ENCODE measurements at regions of chr6 and their contacts with region 1.

Region 1: DNA sequence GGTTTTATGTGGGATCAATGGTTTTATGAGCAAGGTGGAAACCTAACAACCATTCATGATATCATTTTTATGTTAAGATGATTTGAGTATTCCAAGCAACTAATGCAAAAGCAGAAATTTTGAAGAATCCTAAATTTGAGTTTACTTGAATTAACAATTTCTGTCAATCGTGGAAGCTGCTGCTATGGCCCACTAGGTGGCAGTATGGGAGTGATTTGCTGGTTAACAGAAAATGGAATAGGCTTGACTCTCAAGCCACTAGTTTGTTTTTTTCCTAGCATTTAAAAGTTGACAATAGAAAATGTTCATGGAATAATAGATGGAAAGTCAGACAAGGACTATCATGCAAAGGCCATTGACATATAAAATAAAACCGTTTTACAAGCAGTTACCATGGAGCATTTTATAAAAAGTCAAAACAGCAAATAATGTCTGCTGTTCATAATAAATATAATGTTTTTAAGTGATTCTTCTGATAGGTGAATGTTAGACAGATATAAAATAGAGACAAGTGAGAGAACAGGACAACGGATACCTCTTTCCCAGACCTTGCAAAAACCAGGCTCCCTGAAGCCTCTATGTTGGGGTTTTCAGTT is 43.0 kb upstream of the TMEM200A start:
- DNase-seq: peak; percentile 57 to 66
- H3K4me3 ChIP-seq: no peak overlapping the region
- H3K4me1 ChIP-seq: no peaks in the 10 kb centered on the region
- H3K27me3 ChIP-seq: peaks cover 6% of the 10 kb centered on the region; the same call in 1 of the 2 replicates

Region 2: GRCh38 chr6:130167655-130168054 is 155.1 kb before region 1 on chr6:
- in situ Hi-C with region 1: no loop called
- DNase-seq: no peak
- H3K4me3 ChIP-seq: no peak overlapping the region
- H3K4me1 ChIP-seq: no peaks in the 10 kb centered on the region
- H3K27me3 ChIP-seq: no peaks in the 10 kb centered on the region; the same call in 1 of the 2 replicates

Region 3: DNA sequence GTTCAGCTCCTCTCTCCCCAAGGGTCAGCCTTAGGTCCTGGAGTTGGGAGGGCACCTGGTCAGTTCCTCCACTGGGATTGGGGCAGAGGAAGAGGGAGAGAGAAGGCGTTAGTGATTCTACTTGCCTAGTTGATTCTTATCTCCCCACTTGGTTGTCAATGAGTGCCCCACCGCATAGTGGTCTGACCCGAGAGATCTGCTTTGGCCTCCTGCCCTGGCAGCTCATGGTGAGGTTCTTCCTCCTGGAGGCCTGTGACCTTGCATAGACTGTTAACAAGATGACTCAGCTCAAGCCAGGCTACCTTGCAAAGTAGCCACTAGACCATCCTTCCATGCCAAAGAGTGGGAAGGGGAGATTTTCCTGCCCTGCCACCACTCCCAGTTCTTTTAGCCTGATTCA is 203.7 kb after region 1 on chr6:
- in situ Hi-C with region 1: no loop called
- DNase-seq: no peak
- H3K4me3 ChIP-seq: no peak overlapping the region
- H3K4me1 ChIP-seq: no peaks in the 10 kb centered on the region
- H3K27me3 ChIP-seq: no peaks in the 10 kb centered on the region

Region 4: DNA sequence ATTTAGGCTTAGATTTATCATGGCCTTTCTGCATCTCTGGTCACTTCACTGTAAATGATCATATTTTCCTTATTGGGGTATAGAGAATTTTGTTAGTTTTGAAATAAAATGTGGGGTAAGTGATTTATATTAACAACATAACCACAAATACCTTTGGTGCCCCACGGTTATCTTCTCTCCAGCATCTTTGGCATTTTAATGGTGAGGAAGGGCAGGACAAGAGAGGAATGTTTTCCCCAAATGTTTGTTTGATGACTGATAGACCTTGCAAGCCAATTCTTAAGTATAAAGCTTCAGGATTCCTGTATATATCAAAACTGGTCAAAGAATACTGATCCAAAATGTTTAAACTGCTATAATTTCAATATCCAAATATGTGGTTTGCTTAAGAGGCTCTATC is 332.8 kb after region 1 on chr6:
- in situ Hi-C with region 1: no loop called
- DNase-seq: no peak
- H3K4me3 ChIP-seq: no peak overlapping the region
- H3K4me1 ChIP-seq: no peaks in the 10 kb centered on the region
- H3K27me3 ChIP-seq: no peaks in the 10 kb centered on the region

Region 5: GRCh38 chr6:130708338-130708737 is 385.6 kb after region 1 on chr6:
- in situ Hi-C with region 1: loop called (anchors 25 kb)
- DNase-seq: no peak
- H3K4me3 ChIP-seq: no peak overlapping the region
- H3K4me1 ChIP-seq: no peaks in the 10 kb centered on the region
- H3K27me3 ChIP-seq: no peaks in the 10 kb centered on the region

Region 6: GRCh38 chr6:130843575-130844320 is 521.0 kb after region 1 on chr6:
- in situ Hi-C with region 1: loop called (anchors 10 kb)
- DNase-seq: peak; percentile 18 to 56
- H3K4me3 ChIP-seq: no peak overlapping the region
- H3K4me1 ChIP-seq: peaks cover 40% of the 10 kb centered on the region
- H3K27me3 ChIP-seq: no peaks in the 10 kb centered on the region

Measured in HAP-1 (cell line).